ENCODE measurements at regions of chr11 and their contacts with region 1.

Region 1: DNA sequence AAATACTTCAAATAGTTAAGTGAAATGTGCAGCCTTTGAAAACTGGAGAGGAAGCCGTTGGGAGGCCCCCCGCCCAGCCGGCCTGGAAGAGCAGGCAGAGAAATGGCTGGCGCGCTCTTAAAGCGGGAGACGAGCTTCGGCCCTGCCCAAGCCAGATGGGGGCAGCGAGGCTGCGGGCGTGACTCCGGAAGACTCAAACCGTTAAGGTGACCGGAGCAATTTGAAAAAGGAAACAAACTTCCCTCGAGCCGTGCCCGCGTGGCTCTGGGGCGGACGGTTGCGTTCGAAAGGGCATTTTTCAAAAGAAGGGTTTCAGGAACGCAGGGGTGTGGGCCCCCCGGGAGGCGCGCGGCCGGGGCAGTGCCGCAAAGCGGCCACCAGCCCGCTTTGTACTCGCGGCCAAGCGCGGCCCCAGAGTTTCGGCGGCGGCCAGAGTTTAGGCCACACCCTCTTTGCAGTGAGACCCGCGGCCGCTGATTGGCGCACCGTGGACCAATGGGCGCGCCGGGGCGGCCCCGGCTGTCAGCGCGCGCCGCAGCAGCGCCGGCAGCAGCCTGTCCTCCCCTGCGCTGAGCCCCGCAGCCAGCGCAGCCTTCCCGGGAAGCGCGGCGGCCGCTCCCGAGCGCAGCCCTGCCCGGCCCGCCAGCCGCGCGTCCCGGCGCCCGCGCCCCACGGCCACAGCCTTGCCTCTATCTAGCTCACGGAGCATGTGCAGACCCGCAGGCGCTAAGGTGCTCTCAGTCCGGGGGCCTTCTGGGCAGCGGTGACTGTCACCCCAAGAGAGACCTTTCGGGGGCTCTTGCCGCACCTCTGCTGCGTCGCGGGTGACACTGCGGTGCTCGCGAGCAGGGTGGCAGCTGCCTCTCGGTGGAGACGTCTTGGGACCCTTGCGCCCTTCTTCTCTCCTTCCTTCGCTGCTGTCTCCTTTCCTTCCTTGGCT is at the start of gene NAV2:
- DNase-seq: peak; percentile 91
- H3K4me3 ChIP-seq: peak within 1 kb of the TSS; percentile 45 to 51
- H3K27ac ChIP-seq: peak within 1 kb of the TSS; percentile 85 to 86
- H3K4me1 ChIP-seq: peaks cover 4% of the 10 kb centered on the region
- H3K27me3 ChIP-seq: no peaks in the 10 kb centered on the region
- CTCF ChIP-seq: peak in 2 of 4 experiments; percentile 33 to 35
- POLR2A ChIP-seq: peak; percentile 97
- total RNA-seq, gene NAV2: 17.1 to 26.6 TPM

Region 2: GRCh38 chr11:19577976-19578619 is 134.5 kb before region 1 on chr11:
- intact Hi-C with region 1: loop called (anchors 5 kb)
- DNase-seq: peak; percentile 58
- H3K4me3 ChIP-seq: no peak overlapping the region
- H3K27ac ChIP-seq: peak overlapping the region; percentile 72 to 78
- H3K4me1 ChIP-seq: peaks cover 9% of the 10 kb centered on the region
- H3K27me3 ChIP-seq: no peaks in the 10 kb centered on the region
- CTCF ChIP-seq: no peak
- POLR2A ChIP-seq: no peak

Region 3: GRCh38 chr11:19605520-19606371 is 106.8 kb before region 1 on chr11:
- intact Hi-C with region 1: loop called (anchors 5 kb)
- DNase-seq: peak; percentile 30
- H3K4me3 ChIP-seq: no peak overlapping the region
- H3K27ac ChIP-seq: peak overlapping the region; percentile 68 to 74
- H3K4me1 ChIP-seq: peaks cover 25% of the 10 kb centered on the region
- H3K27me3 ChIP-seq: no peaks in the 10 kb centered on the region
- CTCF ChIP-seq: no peak
- POLR2A ChIP-seq: no peak

Region 4: DNA sequence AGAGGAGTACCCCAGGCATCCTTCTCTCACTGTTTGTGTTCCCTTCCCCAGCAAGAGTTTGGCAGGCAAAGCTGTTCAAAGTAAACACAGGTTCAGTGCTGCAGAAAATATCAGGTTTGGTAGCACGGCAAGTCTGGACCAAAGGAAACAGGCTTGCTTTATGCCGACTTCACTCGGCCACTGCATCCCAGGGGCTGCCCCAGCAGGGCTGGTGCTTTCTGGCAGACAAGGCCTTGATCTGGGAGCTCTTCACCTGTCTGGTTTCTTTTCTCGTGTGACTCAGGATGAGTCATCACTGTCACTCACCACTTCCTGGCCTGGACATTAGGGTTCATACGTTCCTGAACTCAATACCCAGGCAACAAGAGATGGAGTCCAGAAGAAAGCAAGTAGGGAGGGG is 52.5 kb before region 1 on chr11:
- intact Hi-C with region 1: no loop called
- DNase-seq: peak; percentile 69
- H3K4me3 ChIP-seq: no peak overlapping the region
- H3K27ac ChIP-seq: peak overlapping the region; percentile 16 to 53
- H3K4me1 ChIP-seq: no peaks in the 10 kb centered on the region
- H3K27me3 ChIP-seq: no peaks in the 10 kb centered on the region
- CTCF ChIP-seq: no peak
- POLR2A ChIP-seq: no peak

Region 5: GRCh38 chr11:19673924-19674729 is 38.4 kb before region 1 on chr11:
- intact Hi-C with region 1: loop called (anchors 5 kb)
- DNase-seq: peak; percentile 76
- H3K4me3 ChIP-seq: no peak overlapping the region
- H3K27ac ChIP-seq: peak overlapping the region; percentile 69 to 83
- H3K4me1 ChIP-seq: no peaks in the 10 kb centered on the region
- H3K27me3 ChIP-seq: no peaks in the 10 kb centered on the region
- CTCF ChIP-seq: no peak
- POLR2A ChIP-seq: no peak

Region 6: DNA sequence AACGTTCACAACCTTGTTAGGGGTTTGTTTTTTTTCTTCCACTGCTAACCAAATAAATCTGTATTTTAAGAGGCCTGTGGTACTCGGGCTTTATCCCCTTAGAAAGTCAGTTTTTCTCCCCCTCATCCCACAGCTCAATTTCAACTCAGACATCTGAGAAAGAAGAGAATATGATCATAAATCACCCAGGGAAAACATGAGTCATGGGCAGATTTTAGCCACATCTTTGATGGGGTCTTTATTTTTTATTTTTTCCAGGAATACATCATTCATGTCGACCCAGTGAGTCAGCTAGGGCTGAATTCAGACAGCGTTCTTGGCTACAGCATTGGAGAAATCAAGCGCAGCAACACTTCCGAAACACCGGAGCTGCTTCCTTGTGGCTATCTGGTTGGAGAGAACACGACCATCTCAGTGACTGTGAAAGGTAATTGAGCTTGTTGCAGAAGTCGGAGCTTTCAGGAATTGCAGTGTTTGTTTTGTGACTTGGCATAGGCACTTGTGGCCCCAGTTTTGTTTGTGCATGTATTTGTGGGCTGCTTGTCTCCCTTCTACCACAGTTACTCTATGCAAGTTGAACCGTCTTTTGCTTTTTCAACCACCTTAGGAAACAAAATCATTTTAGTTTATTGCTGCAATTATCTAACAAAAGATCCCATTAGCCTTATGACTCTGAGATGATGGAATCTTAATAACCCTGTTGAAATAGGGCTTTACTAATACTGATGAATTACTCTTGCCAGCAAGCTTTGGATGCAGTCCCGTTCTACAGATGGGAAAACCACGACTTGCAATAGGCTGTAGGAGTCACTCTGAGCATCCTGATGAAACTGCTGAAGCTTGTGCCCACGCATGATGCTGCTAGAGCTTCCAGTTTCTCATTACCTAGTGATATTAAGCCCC is 385.0 kb after region 1 on chr11:
- intact Hi-C with region 1: no loop called
- DNase-seq: no peak
- H3K4me3 ChIP-seq: no peak overlapping the region
- H3K27ac ChIP-seq: no peak overlapping the region
- H3K4me1 ChIP-seq: no peaks in the 10 kb centered on the region
- H3K27me3 ChIP-seq: no peaks in the 10 kb centered on the region
- CTCF ChIP-seq: no peak
- POLR2A ChIP-seq: no peak

Measured in prostate gland (tissue), 2 donors.